Endothelial cell of umbilical vein (primary cell): ENCODE measurements at regions of chr4 and their contacts with region 1.

Region 1: DNA sequence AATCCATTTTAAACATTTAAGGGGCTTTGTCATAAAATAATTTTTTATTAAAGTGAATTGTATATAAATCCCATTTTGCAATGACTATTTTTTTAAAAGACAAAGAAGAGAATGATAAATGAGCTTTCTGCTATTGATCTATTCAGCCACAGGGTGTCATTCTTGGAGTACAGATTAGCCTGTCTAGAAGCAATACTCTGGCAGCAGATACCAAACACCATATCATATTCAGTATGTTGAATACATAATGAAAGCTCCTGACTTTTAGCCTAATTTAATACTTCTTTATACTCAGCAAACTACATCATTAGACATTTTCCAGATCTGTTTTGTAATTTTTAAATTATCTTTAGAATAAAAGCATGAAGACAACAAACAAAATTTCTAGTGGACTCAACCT is 496.3 kb downstream of the PDGFC start:
- DNase-seq: peak; percentile 69
- H3K4me3 ChIP-seq: no peak overlapping the region
- H3K27ac ChIP-seq: peak overlapping the region; percentile 64
- H3K4me1 ChIP-seq: peaks cover 17% of the 10 kb centered on the region
- H3K27me3 ChIP-seq: no peaks in the 10 kb centered on the region
- CTCF ChIP-seq: peak; percentile 32 to 42
- POLR2A ChIP-seq: no peak

Region 2: DNA sequence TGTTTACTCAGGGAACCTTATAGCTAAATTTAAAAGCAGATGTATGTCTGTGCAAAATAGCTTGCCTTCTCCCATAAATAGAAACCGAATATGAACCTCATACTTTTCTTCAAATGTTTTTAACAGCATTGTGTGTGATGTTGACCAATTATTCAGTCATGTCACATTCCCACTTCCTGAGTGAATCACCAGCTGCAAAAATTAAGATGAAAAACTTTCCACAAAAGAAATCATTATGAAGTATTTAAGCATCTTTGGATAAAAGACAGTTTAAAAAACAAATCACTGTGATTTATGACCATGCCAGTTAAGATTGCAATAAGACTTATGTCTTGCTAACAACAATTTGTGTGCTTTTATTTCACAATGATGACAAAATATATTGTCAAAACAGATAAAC is 276.2 kb after region 1 on chr4:
- CTCF ChIA-PET with region 1: interaction called, 10 read pairs
- POLR2A ChIA-PET with region 1: no interaction called
- dilution Hi-C with region 1: no loop called
- intact Hi-C with region 1: no loop called
- DNase-seq: peak; percentile 65
- H3K4me3 ChIP-seq: no peak overlapping the region
- H3K27ac ChIP-seq: no peak overlapping the region
- H3K4me1 ChIP-seq: peaks cover 7% of the 10 kb centered on the region
- H3K27me3 ChIP-seq: no peaks in the 10 kb centered on the region
- CTCF ChIP-seq: no peak
- POLR2A ChIP-seq: no peak

Region 3: GRCh38 chr4:156946516-156947424 is 471.4 kb after region 1 on chr4:
- CTCF ChIA-PET with region 1: interaction called, 50 read pairs
- POLR2A ChIA-PET with region 1: interaction called, 3 read pairs
- dilution Hi-C with region 1: no loop called
- intact Hi-C with region 1: loop called (anchors 1 kb)
- DNase-seq: peak; percentile 89
- H3K4me3 ChIP-seq: no peak overlapping the region
- H3K27ac ChIP-seq: peak overlapping the region; percentile 84
- H3K4me1 ChIP-seq: peaks cover 60% of the 10 kb centered on the region
- H3K27me3 ChIP-seq: no peaks in the 10 kb centered on the region
- CTCF ChIP-seq: no peak
- POLR2A ChIP-seq: no peak

Region 4: DNA sequence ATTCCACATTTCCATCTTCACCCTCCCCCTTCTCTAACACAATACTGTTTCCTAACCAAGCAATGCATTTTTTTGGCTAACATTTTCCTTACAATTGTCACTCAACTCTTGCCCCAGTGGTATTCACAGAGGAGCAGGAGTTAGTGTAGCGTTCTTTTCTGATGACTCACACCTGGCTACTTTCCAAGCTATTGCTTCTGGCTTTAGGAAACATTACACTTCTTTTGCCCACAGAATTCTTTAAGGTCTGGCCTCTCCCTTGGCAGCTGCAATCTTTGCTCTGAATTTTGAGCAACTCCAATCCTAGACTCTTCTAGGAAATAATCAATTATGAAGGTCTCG is 523.8 kb after region 1 on chr4:
- CTCF ChIA-PET with region 1: interaction called, 13 read pairs
- POLR2A ChIA-PET with region 1: no interaction called
- dilution Hi-C with region 1: no loop called
- intact Hi-C with region 1: no loop called
- DNase-seq: peak; percentile 98
- H3K4me3 ChIP-seq: peak overlapping the region in 1 of 3 experiments; percentile 2
- H3K27ac ChIP-seq: peak overlapping the region; percentile 62
- H3K4me1 ChIP-seq: peaks cover 23% of the 10 kb centered on the region
- H3K27me3 ChIP-seq: no peaks in the 10 kb centered on the region
- CTCF ChIP-seq: no peak
- POLR2A ChIP-seq: no peak

Region 5: GRCh38 chr4:157128395-157128794 is 653.1 kb after region 1 on chr4:
- CTCF ChIA-PET with region 1: interaction called, 22 read pairs
- POLR2A ChIA-PET with region 1: no interaction called
- dilution Hi-C with region 1: no loop called
- intact Hi-C with region 1: loop called (anchors 1 kb)
- DNase-seq: peak; percentile 74
- H3K4me3 ChIP-seq: no peak overlapping the region
- H3K27ac ChIP-seq: no peak overlapping the region
- H3K4me1 ChIP-seq: no peaks in the 10 kb centered on the region
- H3K27me3 ChIP-seq: no peaks in the 10 kb centered on the region
- CTCF ChIP-seq: peak; percentile 20 to 33
- POLR2A ChIP-seq: no peak

Region 6: DNA sequence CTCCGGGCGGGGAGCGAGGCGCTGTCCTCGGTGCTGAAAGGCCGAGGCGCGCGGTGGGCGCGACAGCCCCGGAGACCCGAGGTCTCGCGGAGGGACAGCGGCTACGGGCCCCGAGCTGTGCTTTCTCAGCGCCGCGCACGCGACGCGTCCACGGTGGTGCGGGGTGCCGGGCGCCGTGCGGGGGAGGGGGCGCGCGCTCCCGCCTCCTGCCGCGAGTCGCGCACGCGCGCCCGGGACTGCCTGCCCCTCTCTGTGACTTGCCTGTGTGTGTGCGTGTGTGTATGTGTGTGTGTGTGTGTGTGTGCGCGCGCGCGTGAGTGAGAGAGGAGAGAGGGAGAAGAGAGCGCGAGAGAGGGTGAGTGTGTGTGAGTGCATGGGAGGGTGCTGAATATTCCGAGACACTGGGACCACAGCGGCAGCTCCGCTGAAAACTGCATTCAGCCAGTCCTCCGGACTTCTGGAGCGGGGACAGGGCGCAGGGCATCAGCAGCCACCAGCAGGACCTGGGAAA is 745.1 kb after region 1 on chr4 and contains the start of gene GRIA2:
- CTCF ChIA-PET with region 1: interaction called, 20 read pairs
- POLR2A ChIA-PET with region 1: no interaction called
- dilution Hi-C with region 1: no loop called
- intact Hi-C with region 1: loop called (anchors 5 kb)
- DNase-seq: peak; percentile 69
- H3K4me3 ChIP-seq: peak within 1 kb of the TSS in 2 of 3 experiments; percentile 11 to 22
- H3K27ac ChIP-seq: no peak within 1 kb of the TSS
- H3K4me1 ChIP-seq: peaks cover 7% of the 10 kb centered on the region
- H3K27me3 ChIP-seq: peaks cover 28 to 45% of the 10 kb centered on the region in 2 experiments
- CTCF ChIP-seq: no peak
- POLR2A ChIP-seq: no peak
- total RNA-seq, gene GRIA2: not detected in 2 replicates

Region 7: GRCh38 chr4:158172261-158173258 is 1697.2 kb after region 1 on chr4 and contains the start of gene GASK1B:
- CTCF ChIA-PET with region 1: interaction called, 3 read pairs
- POLR2A ChIA-PET with region 1: no interaction called
- dilution Hi-C with region 1: no loop called
- intact Hi-C with region 1: loop called (anchors 10 kb)
- DNase-seq: peak; percentile 91
- H3K4me3 ChIP-seq: peak within 1 kb of the TSS; percentile 24 to 94 (median 53)
- H3K27ac ChIP-seq: peak within 1 kb of the TSS; percentile 59
- H3K4me1 ChIP-seq: peaks cover 28% of the 10 kb centered on the region
- H3K27me3 ChIP-seq: no peaks in the 10 kb centered on the region
- CTCF ChIP-seq: peak; percentile 50 to 57
- POLR2A ChIP-seq: no peak
- total RNA-seq, gene GASK1B: 235 and 238 TPM in 2 replicates